ENCODE measurements at regions of chr5 and their contacts with region 1.

Region 1: DNA sequence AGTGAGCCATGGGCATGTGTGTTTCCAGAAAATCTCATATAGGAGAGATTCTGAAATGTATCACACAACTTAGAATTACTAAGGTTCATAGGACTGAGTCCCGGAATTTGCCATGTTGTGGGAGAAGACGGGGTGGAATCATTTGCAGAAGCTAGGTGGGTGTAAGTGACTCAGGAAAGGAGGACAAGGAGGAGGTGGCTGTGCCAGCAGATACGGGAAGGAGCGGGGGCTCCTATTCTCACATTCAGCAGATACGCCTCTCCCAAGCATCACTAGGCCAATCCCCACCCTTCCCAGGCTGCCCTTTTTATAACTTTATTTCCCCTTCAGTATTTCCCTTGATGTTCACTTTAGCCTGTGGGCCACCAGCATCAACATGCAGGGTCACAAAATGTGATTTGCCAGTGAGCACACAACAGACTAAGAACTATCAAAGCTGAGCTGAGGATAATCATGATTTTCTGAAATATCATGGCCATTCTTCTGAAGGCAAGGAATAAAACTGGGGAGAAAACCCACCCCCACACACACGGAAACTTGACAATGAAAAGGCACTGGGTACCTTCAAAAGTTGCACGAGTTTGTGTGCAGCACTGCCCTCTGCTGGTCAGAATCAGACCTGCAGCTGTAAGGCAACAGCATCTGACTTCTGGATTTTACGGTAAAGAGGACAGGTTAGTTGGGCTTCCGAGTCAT is 133.2 kb downstream of the MTX3 start:
- DNase-seq: peak; percentile 71
- H3K4me3 Mint-ChIP-seq: no peak overlapping the region
- H3K27ac Mint-ChIP-seq: no peak overlapping the region
- H3K4me1 Mint-ChIP-seq: no peaks in the 10 kb centered on the region
- H3K27me3 Mint-ChIP-seq: no peaks in the 10 kb centered on the region
- CTCF ChIP-seq: peak; percentile 80

Region 2: DNA sequence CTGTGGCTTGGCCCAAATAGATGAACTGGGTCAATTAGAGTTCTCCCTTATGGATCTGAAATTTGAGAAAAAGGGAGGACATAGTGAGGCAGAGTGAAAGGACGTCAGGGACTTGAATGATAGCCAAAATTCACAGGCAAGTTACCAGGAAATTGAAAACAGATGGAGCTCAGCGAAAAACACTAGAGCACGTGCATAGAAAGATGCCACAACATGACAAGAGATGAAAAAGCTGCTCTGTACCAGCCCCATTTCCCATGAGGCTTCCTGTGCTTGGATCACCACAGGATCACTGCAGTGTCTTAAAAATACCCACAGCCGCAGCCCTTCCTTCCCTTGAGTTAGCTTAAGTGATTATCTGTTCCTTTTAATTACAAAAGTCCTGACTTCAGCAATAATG is 304.9 kb before region 1 on chr5:
- CTCF ChIA-PET with region 1: interaction called, 10 read pairs
- POLR2A ChIA-PET with region 1: interaction called, 3 read pairs
- intact Hi-C with region 1: no loop called
- DNase-seq: no peak
- H3K4me3 Mint-ChIP-seq: no peak overlapping the region
- H3K27ac Mint-ChIP-seq: no peak overlapping the region
- H3K4me1 Mint-ChIP-seq: peaks cover 2% of the 10 kb centered on the region
- H3K27me3 Mint-ChIP-seq: no peaks in the 10 kb centered on the region
- CTCF ChIP-seq: no peak

Region 3: DNA sequence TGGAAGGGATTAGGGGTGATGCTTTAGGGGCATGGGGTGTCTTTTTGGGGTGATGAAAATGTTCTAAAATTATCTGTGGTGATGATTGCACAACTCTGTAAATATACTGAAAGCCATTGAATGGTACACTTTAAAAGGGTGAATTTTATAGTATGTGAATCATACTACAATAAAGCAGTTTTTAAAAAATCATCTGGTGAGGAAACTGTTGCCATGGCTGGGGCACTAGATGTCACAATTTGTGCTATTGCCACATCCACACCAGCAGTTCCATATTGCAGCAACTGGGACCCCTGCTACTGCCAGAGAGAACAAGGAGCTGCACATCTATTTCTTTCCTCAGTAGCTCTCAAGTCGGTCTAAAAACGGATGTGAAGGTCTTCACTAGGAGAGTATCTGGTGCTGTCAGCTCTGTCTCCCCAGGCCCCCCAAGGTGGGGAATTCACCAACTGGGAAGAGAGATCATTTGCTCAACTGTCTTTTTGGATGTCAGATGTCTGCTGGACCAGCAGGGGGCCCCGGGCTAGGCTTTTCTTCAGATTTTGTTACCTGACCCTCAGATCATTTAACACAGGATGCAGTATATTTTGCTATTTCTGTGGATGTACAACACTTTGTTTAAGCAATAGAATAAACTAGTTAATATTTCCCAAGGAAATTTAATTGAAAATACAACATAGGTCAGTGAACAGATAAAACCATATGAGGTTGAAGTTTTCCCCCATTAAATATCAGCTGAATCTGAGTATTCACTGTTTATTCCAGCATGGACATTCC is 155.1 kb before region 1 on chr5:
- CTCF ChIA-PET with region 1: interaction called, 12 read pairs
- POLR2A ChIA-PET with region 1: no interaction called
- intact Hi-C with region 1: loop called (anchors 1 kb)
- DNase-seq: peak; percentile 60
- H3K4me3 Mint-ChIP-seq: no peak overlapping the region
- H3K27ac Mint-ChIP-seq: peak overlapping the region; percentile 63
- H3K4me1 Mint-ChIP-seq: peaks cover 10% of the 10 kb centered on the region
- H3K27me3 Mint-ChIP-seq: no peaks in the 10 kb centered on the region
- CTCF ChIP-seq: peak; percentile 43

Region 4: GRCh38 chr5:79806741-79807140 is 51.1 kb before region 1 on chr5:
- CTCF ChIA-PET with region 1: no interaction called
- POLR2A ChIA-PET with region 1: no interaction called
- intact Hi-C with region 1: no loop called
- DNase-seq: no peak
- H3K4me3 Mint-ChIP-seq: no peak overlapping the region
- H3K27ac Mint-ChIP-seq: no peak overlapping the region
- H3K4me1 Mint-ChIP-seq: no peaks in the 10 kb centered on the region
- H3K27me3 Mint-ChIP-seq: no peaks in the 10 kb centered on the region
- CTCF ChIP-seq: no peak

Region 5: GRCh38 chr5:79845448-79846197 is 12.2 kb before region 1 on chr5:
- CTCF ChIA-PET with region 1: interaction called, 21 read pairs
- POLR2A ChIA-PET with region 1: interaction called, 3 read pairs
- intact Hi-C with region 1: no loop called
- DNase-seq: peak; percentile 68
- H3K4me3 Mint-ChIP-seq: no peak overlapping the region
- H3K27ac Mint-ChIP-seq: peak overlapping the region; percentile 78
- H3K4me1 Mint-ChIP-seq: peaks cover 12% of the 10 kb centered on the region
- H3K27me3 Mint-ChIP-seq: no peaks in the 10 kb centered on the region
- CTCF ChIP-seq: no peak

Region 6: DNA sequence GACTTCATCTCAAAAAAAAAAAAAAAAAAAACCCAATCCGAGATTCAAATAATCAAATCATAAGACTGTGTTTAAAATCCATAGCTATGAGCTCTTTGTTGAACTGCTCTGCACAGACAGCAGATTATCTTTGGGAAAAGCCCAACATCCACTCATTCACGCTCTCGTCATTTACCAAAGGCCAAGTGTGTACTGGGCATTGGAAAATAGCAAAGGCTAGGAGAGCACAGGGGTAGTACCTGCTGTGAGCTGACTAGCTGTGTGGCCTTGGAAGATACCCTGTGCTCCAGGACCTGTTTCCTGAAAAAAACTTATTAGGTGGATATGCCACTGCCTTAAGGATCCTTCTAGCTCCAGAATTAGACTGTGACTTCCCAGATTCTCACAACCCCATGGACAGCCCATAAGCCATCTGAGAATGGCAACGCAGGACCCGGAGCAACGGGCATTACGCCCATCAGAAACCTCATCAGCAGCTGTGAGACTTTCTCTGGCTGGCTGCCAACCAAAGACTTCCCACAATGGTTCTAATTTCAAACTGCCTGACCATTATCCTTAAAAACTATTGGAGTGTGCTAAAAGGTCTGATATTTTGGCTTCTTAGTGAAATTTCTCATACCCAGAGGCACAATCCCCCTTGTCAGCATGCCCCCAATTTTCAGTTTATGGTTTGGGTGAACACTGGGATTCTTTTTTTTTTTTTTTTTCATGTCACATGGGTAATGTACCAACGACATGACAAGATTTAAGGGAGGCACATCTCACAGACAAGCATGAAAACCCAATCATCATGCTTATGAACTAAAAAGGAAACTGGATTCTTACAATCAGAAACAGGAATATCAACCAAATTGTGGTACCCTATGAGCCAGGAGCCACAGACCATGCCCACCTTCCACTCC is 381.2 kb after region 1 on chr5:
- CTCF ChIA-PET with region 1: no interaction called
- POLR2A ChIA-PET with region 1: no interaction called
- intact Hi-C with region 1: no loop called
- DNase-seq: peak; percentile 41
- H3K4me3 Mint-ChIP-seq: no peak overlapping the region
- H3K27ac Mint-ChIP-seq: no peak overlapping the region
- H3K4me1 Mint-ChIP-seq: peaks cover 7% of the 10 kb centered on the region
- H3K27me3 Mint-ChIP-seq: no peaks in the 10 kb centered on the region
- CTCF ChIP-seq: no peak

Measured in MCF 10A (cell line).